ENCODE measurements at regions of chr7 and their contacts with region 1.

Region 1: DNA sequence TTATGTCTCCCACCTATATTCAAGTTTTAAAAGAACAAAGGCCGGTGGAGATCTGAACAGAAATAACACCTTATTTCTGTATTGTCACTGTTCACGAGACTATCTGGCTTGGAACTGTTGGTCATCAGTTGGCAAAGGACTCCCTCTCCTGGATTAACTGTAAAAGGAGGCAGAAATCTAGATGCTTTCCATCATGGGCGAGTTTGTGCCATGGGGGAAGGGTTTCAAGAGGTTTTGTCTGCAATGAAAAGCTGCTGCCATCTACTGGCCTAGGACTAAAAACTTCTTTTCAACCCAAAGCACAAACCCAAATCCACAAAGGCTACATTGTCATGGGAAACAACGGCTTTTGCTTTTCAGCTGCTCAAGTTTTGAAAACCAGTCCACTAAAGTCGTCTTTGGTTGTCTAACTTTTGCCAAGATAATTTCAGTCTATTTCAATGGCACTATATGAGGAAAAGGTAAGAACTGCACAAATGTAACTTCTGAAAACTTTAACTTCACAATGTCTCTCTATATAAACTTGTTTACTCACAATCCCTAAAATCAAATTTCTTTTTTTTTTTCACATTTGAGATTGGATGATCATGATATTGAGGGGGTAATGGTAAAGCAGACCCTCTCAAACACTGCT is 196.8 kb downstream of the SKAP2 start:
- DNase-seq: peak; percentile 4 to 82 (median 46)
- ATAC-seq: peak; percentile 70
- H3K4me3 ChIP-seq: no peak overlapping the region
- H3K4me3 Mint-ChIP-seq: no peak overlapping the region
- H3K27ac ChIP-seq: no peak overlapping the region
- H3K27ac Mint-ChIP-seq: no peak overlapping the region
- H3K4me1 ChIP-seq: no peaks in the 10 kb centered on the region
- H3K4me1 Mint-ChIP-seq: peaks cover 20% of the 10 kb centered on the region
- H3K27me3 ChIP-seq: no peaks in the 10 kb centered on the region
- H3K27me3 Mint-ChIP-seq: peaks cover 12% of the 10 kb centered on the region
- CTCF ChIP-seq: peak; percentile 70

Region 2: DNA sequence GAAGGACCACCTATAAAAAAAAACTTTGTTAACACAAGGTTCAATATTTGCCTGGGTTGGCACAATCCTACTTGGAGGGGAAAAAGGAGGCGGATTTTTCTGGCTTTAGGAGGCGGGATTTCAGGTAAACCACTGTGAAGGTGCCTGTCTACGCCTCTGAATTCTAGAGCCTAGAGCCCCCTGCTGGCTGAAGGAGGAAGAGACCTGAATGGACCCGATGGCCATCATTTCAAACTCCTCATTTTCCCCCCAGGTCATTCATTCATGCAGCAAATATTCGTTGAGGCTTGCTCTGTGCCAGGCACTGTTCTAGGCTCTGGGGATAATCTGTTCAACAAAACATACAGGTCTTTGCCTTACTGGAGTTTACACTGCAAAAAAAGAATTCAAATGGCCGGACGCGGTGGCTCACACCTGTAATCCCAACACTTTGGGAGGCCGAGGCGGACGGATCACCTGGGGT is 605.9 kb before region 1 on chr7:
- CTCF ChIA-PET with region 1: no interaction called
- POLR2A ChIA-PET with region 1: no interaction called
- intact Hi-C with region 1: loop called in 1 of 2 experiments (anchors 5 kb)
- DNase-seq: peak; percentile 30 to 81 (median 73)
- ATAC-seq: peak; percentile 85
- H3K4me3 ChIP-seq: no peak overlapping the region
- H3K4me3 Mint-ChIP-seq: no peak overlapping the region
- H3K27ac ChIP-seq: no peak overlapping the region
- H3K27ac Mint-ChIP-seq: no peak overlapping the region
- H3K4me1 ChIP-seq: no peaks in the 10 kb centered on the region
- H3K4me1 Mint-ChIP-seq: no peaks in the 10 kb centered on the region
- H3K27me3 ChIP-seq: no peaks in the 10 kb centered on the region
- H3K27me3 Mint-ChIP-seq: peaks cover 20% of the 10 kb centered on the region
- CTCF ChIP-seq: peak; percentile 91

Region 3: DNA sequence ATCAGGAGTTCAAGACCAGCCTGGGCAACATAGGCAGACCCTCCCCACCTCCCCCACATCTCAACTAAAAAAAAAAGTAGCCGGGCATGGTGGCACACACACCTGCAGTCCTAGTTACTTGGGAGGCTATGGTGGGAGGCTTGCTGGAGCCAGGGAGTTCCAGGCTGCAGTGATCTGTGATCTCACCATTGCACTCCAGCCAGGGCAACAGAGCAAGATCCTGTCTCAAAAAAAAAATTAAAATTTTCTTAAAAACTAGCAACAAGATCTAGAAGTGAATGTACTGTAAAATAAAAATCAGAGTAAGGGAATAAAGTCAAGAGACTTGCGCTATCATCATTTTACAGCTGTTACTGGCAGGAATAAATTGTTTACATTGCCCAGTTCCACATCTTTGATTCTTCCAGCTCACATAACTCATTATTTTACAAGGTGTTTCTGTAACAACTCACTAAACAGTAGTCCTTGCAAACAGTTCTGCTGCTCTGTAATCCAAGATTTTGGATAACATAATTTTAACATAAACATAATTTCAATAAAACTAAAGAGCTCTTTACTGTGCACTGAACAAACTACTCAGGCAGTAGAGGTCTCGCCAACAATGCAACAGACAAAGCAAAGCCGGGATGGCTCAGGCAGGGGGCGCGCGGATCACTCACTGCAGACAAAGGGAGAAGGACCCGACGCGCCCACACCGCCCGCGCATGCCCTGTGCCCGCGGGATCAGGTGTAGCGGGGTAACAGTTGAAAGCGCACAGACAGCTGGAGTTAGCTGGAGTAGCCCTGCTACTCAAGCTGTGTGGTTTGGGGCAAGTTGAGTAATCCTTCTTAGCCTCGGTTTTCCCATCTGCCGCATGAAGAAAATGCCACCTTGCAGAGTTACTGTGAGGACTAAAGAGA is 588.9 kb before region 1 on chr7:
- CTCF ChIA-PET with region 1: interaction called, 7 read pairs
- POLR2A ChIA-PET with region 1: no interaction called
- intact Hi-C with region 1: loop called in 1 of 2 experiments (anchors 5 kb)
- DNase-seq: peak; percentile 65 to 88 (median 81)
- ATAC-seq: peak; percentile 100
- H3K4me3 ChIP-seq: peak overlapping the region in 1 of 2 experiments; percentile 18
- H3K4me3 Mint-ChIP-seq: no peak overlapping the region
- H3K27ac ChIP-seq: no peak overlapping the region
- H3K27ac Mint-ChIP-seq: no peak overlapping the region
- H3K4me1 ChIP-seq: peaks cover 4% of the 10 kb centered on the region
- H3K4me1 Mint-ChIP-seq: peaks cover 6% of the 10 kb centered on the region
- H3K27me3 ChIP-seq: peaks cover 0 to 8% of the 10 kb centered on the region in 2 experiments
- H3K27me3 Mint-ChIP-seq: peaks cover 19% of the 10 kb centered on the region
- CTCF ChIP-seq: peak; percentile 80

Region 4: DNA sequence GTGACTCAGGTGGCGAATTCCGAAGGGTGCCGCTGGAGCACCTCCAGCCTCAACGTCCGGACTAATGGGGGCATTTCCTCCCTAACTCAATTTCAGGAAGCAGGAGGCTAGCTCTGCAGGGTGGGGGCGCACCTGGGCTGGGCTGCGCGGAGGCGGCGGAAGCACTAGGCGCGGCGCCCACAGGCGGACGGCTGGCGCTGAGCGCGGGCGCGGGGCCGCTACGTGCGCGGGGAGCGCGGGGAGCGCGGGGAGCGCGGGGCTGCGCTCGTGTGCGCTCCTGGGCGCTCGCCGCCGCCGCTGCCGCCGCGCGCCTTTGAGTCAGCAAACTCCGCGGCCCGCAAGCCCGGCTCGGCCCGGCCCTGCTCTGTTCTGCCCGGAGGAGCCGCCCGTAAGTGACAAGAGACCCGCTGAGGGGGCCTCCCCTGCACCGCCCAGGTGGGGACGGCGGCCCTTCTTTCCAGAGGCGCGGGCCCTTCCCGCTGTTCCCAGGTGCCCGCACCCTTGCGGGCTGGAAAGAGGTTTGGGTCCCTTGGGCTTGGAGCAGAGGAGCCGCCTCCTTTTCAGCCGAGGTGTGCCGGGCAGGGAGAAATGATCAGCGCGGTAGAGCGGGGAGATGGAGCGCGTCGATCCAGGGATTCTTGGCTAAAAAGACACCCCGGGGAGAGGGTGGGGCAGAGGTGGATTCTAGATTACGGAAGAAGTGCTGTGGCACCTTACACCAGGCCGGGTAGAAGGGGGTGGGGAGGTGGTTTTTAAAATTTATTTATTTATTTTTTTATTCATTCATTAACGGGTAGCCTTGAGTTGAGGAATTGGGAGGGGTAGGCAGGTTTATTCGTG is 375.7 kb before region 1 on chr7 and contains the start of gene SNX10:
- CTCF ChIA-PET with region 1: interaction called, 3 read pairs
- POLR2A ChIA-PET with region 1: no interaction called
- intact Hi-C with region 1: loop called in 1 of 2 experiments (anchors 2 kb)
- DNase-seq: peak; percentile 45 to 91 (median 72)
- ATAC-seq: peak; percentile 79
- H3K4me3 ChIP-seq: peak within 1 kb of the TSS; percentile 70 to 94
- H3K4me3 Mint-ChIP-seq: peak within 1 kb of the TSS; percentile 91
- H3K27ac ChIP-seq: peak within 1 kb of the TSS; percentile 43 to 78
- H3K27ac Mint-ChIP-seq: peak within 1 kb of the TSS; percentile 85
- H3K4me1 ChIP-seq: peaks cover 32% of the 10 kb centered on the region
- H3K4me1 Mint-ChIP-seq: peaks cover 38% of the 10 kb centered on the region
- H3K27me3 ChIP-seq: no peaks in the 10 kb centered on the region
- H3K27me3 Mint-ChIP-seq: no peaks in the 10 kb centered on the region
- CTCF ChIP-seq: no peak
- total RNA-seq, gene SNX10: 3.9 to 7.0 TPM

Region 5: DNA sequence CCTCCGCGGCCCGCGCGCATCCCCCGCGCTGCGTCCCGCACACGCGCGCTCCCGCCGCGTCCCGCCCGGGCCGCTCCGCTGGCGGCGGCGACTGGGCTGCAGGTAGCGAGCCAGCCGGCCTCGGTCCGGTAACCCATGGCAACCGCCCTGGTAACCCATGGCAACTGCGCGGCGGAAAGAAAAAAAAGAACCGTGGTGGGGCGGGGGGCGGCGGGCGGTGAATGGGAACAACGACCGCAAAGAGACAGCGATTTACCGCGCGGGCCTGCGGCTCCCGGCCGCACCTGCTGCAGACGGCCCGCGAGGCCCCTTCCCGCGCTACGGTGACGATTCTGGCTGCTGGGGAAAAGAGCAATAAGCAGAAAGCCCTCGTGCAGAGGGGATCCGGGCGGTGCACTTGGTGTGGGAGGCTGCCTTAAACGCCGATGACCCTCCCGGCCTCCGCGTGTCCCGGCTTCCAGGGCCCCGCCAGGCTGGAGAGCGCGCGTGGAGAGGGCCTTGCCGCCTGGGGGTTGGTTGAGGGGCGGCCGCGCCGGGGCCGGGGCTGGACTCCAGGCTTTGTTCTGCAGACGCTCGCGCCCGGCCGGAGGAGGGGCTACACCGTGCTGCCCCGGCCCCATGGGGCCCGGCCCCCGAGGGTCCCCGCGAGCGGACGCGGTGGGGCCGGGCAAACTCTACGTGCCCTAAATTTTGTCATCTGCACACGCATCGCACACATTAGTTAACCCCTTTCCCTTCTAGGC is 291.3 kb before region 1 on chr7:
- CTCF ChIA-PET with region 1: interaction called, 6 read pairs
- POLR2A ChIA-PET with region 1: no interaction called
- intact Hi-C with region 1: loop called in 1 of 2 experiments (anchors 1 kb)
- DNase-seq: peak in 5 of 9 experiments; percentile 9 to 56 (median 52)
- ATAC-seq: peak; percentile 41
- H3K4me3 ChIP-seq: peak overlapping the region; percentile 57 to 75
- H3K4me3 Mint-ChIP-seq: peak overlapping the region; percentile 84
- H3K27ac ChIP-seq: no peak overlapping the region
- H3K27ac Mint-ChIP-seq: no peak overlapping the region
- H3K4me1 ChIP-seq: peaks cover 8% of the 10 kb centered on the region
- H3K4me1 Mint-ChIP-seq: peaks cover 5% of the 10 kb centered on the region
- H3K27me3 ChIP-seq: peaks cover 7 to 11% of the 10 kb centered on the region in 2 experiments
- H3K27me3 Mint-ChIP-seq: peaks cover 29% of the 10 kb centered on the region
- CTCF ChIP-seq: no peak

Region 6: GRCh38 chr7:26686448-26686981 is 18.9 kb after region 1 on chr7:
- CTCF ChIA-PET with region 1: interaction called, 49 read pairs
- POLR2A ChIA-PET with region 1: interaction called, 3 read pairs
- intact Hi-C with region 1: loop called in 1 of 2 experiments (anchors 2 kb)
- DNase-seq: peak in 3 of 9 experiments; percentile 5 to 59 (median 49)
- ATAC-seq: peak; percentile 38
- H3K4me3 ChIP-seq: no peak overlapping the region
- H3K4me3 Mint-ChIP-seq: no peak overlapping the region
- H3K27ac ChIP-seq: no peak overlapping the region
- H3K27ac Mint-ChIP-seq: no peak overlapping the region
- H3K4me1 ChIP-seq: no peaks in the 10 kb centered on the region
- H3K4me1 Mint-ChIP-seq: no peaks in the 10 kb centered on the region
- H3K27me3 ChIP-seq: no peaks in the 10 kb centered on the region
- H3K27me3 Mint-ChIP-seq: peaks cover 28% of the 10 kb centered on the region
- CTCF ChIP-seq: peak; percentile 89

Region 7: DNA sequence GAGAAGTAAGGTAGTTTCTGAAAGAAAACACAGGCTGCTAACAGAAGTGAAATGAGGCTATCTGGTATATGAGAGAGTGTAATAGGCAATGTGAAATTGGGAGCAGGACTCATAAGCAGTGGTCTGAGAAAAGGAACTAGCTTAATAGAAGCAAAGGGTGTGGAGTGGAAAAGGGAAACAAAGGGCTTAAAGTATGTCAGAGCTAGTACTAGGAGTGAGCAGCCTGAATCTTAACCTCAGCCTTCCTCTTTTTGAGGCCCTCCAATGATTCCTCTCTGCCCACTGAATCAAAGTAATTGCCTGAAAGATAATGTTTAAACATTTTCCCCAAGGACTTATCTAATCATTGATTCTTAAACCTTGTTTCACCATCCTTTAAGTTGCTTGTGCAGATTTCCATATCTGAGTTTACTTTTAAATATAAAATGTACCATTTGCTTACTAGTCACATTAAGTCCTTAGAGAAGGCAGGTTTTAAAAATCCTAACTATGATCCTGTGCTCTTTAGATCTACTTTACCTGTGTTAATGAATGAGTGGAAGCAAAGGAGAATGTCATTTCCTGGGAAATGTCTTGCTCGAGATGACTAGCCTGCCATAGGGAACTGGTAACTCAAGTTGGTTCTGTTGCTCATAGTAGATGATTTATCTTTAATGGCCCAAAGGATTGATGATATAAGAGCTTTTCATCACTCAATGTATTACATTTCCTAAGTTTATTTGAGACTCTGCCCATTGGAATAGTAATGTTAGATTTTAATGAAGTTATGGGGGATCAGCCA is 41.8 kb after region 1 on chr7:
- CTCF ChIA-PET with region 1: no interaction called
- POLR2A ChIA-PET with region 1: no interaction called
- intact Hi-C with region 1: no loop called
- DNase-seq: no peak
- ATAC-seq: no peak
- H3K4me3 ChIP-seq: no peak overlapping the region
- H3K4me3 Mint-ChIP-seq: no peak overlapping the region
- H3K27ac ChIP-seq: no peak overlapping the region
- H3K27ac Mint-ChIP-seq: no peak overlapping the region
- H3K4me1 ChIP-seq: no peaks in the 10 kb centered on the region
- H3K4me1 Mint-ChIP-seq: no peaks in the 10 kb centered on the region
- H3K27me3 ChIP-seq: no peaks in the 10 kb centered on the region
- H3K27me3 Mint-ChIP-seq: no peaks in the 10 kb centered on the region
- CTCF ChIP-seq: no peak

Region 8: GRCh38 chr7:26777385-26777784 is 109.8 kb after region 1 on chr7:
- CTCF ChIA-PET with region 1: no interaction called
- POLR2A ChIA-PET with region 1: no interaction called
- intact Hi-C with region 1: no loop called
- DNase-seq: no peak
- ATAC-seq: no peak
- H3K4me3 ChIP-seq: no peak overlapping the region
- H3K4me3 Mint-ChIP-seq: no peak overlapping the region
- H3K27ac ChIP-seq: no peak overlapping the region
- H3K27ac Mint-ChIP-seq: no peak overlapping the region
- H3K4me1 ChIP-seq: no peaks in the 10 kb centered on the region
- H3K4me1 Mint-ChIP-seq: no peaks in the 10 kb centered on the region
- H3K27me3 ChIP-seq: no peaks in the 10 kb centered on the region
- H3K27me3 Mint-ChIP-seq: no peaks in the 10 kb centered on the region
- CTCF ChIP-seq: no peak